ENCODE measurements at regions of chr3 and their contacts with region 1.

Region 1: GRCh38 chr3:120245386-120245785 is 39.6 kb downstream of the GPR156 start:
- DNase-seq: no peak
- ATAC-seq: no peak
- H3K4me3 ChIP-seq: no peak overlapping the region
- H3K27ac ChIP-seq: no peak overlapping the region
- H3K4me1 ChIP-seq: no peaks in the 10 kb centered on the region
- H3K27me3 ChIP-seq: no peaks in the 10 kb centered on the region
- CTCF ChIP-seq: no peak
- POLR2A ChIP-seq: no peak
- RAD21 ChIP-seq: no peak

Region 2: GRCh38 chr3:120177151-120177550 is 68.2 kb before region 1 on chr3:
- CTCF ChIA-PET with region 1: no interaction called
- POLR2A ChIA-PET with region 1: no interaction called
- RAD21 ChIA-PET with region 1: no interaction called
- intact Hi-C with region 1: no loop called
- DNase-seq: no peak
- ATAC-seq: no peak
- H3K4me3 ChIP-seq: no peak overlapping the region
- H3K27ac ChIP-seq: no peak overlapping the region
- H3K4me1 ChIP-seq: peaks cover 0 to 7% of the 10 kb centered on the region in 2 experiments; a peak in 1 of 4 replicates
- H3K27me3 ChIP-seq: no peaks in the 10 kb centered on the region
- CTCF ChIP-seq: no peak
- POLR2A ChIP-seq: no peak
- RAD21 ChIP-seq: no peak

Region 3: DNA sequence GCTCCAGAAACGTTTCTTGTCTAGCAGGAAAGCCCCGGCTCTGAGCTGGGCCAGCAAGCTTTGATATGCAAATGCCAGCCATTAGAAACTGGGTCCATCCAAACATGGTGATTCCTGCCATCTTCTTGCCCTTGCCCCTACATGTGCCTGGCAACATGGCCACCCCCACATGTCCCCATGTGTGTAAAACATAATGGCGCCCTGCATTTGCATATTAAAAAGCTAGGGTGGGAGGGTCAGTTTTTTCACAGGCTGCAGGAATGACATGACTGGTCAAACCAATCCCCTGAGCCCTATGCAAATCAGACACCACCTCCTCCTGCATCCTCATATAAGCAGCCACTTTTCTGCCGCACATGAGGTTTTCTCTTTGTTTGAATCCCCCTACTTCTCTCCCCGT is 18.4 kb after region 1 on chr3:
- CTCF ChIA-PET with region 1: no interaction called
- POLR2A ChIA-PET with region 1: no interaction called
- RAD21 ChIA-PET with region 1: no interaction called
- intact Hi-C with region 1: no loop called
- DNase-seq: no peak
- ATAC-seq: no peak
- H3K4me3 ChIP-seq: no peak overlapping the region
- H3K27ac ChIP-seq: no peak overlapping the region
- H3K4me1 ChIP-seq: no peaks in the 10 kb centered on the region
- H3K27me3 ChIP-seq: no peaks in the 10 kb centered on the region
- CTCF ChIP-seq: no peak
- POLR2A ChIP-seq: no peak
- RAD21 ChIP-seq: no peak

Region 4: GRCh38 chr3:120311863-120312794 is 66.7 kb after region 1 on chr3:
- CTCF ChIA-PET with region 1: no interaction called
- POLR2A ChIA-PET with region 1: no interaction called
- RAD21 ChIA-PET with region 1: no interaction called
- intact Hi-C with region 1: no loop called
- DNase-seq: no peak
- ATAC-seq: no peak
- H3K4me3 ChIP-seq: no peak overlapping the region
- H3K27ac ChIP-seq: no peak overlapping the region
- H3K4me1 ChIP-seq: no peaks in the 10 kb centered on the region
- H3K27me3 ChIP-seq: no peaks in the 10 kb centered on the region
- CTCF ChIP-seq: no peak
- POLR2A ChIP-seq: no peak
- RAD21 ChIP-seq: no peak

Region 5: GRCh38 chr3:120357807-120358206 is 112.4 kb after region 1 on chr3:
- CTCF ChIA-PET with region 1: interaction called, 4 read pairs
- POLR2A ChIA-PET with region 1: no interaction called
- RAD21 ChIA-PET with region 1: no interaction called
- intact Hi-C with region 1: loop called (anchors 1 kb)
- DNase-seq: no peak
- ATAC-seq: peak; percentile 32; the same call in 1 of the 2 replicates
- H3K4me3 ChIP-seq: no peak overlapping the region
- H3K27ac ChIP-seq: no peak overlapping the region
- H3K4me1 ChIP-seq: no peaks in the 10 kb centered on the region
- H3K27me3 ChIP-seq: no peaks in the 10 kb centered on the region
- CTCF ChIP-seq: 0 out of 6 replicates have a peak, but pooled peaks of 2 of the 3 experiments have one; percentile 10 to 16
- POLR2A ChIP-seq: no peak
- RAD21 ChIP-seq: peak; percentile 48; the same call in 1 of the 2 replicates

Region 6: GRCh38 chr3:120506828-120507774 is 261.7 kb after region 1 on chr3:
- CTCF ChIA-PET with region 1: no interaction called
- POLR2A ChIA-PET with region 1: no interaction called
- RAD21 ChIA-PET with region 1: no interaction called
- intact Hi-C with region 1: loop called (anchors 5 kb)
- DNase-seq: peak; percentile 13
- ATAC-seq: peak; percentile 73
- H3K4me3 ChIP-seq: no peak overlapping the region
- H3K27ac ChIP-seq: no peak overlapping the region
- H3K4me1 ChIP-seq: no peaks in the 10 kb centered on the region; a peak in 1 of 4 replicates
- H3K27me3 ChIP-seq: no peaks in the 10 kb centered on the region
- CTCF ChIP-seq: peak; percentile 48 to 78 (median 76); a peak in 5 of 6 replicates
- POLR2A ChIP-seq: no peak
- RAD21 ChIP-seq: peak; percentile 57

Region 7: DNA sequence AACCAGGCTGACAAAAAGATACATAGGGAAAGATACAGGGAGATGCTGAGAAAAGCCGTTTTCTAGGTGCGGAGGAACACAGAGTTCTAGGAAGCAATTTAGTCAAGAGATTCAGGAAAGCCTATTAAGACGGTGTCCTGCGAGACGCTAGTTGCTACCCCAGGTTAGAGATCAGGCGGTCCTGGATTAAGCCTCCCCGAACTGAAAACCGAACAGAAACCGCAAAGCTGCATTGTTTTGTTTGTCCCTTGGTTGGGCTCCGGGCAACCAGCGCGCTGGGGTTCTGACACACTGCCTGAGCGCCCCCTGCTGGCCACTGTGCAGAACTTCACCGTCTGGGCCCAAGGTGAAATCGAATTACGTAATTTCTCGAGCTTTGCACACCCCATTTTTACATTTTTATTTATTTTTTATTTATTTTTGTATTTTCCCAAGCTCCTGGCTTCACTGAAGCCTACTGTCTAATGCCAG is 313.4 kb after region 1 on chr3:
- CTCF ChIA-PET with region 1: interaction called, 26 read pairs
- POLR2A ChIA-PET with region 1: no interaction called
- RAD21 ChIA-PET with region 1: interaction called, 8 read pairs
- intact Hi-C with region 1: loop called (anchors 1 kb)
- DNase-seq: peak; percentile 76
- ATAC-seq: peak; percentile 62
- H3K4me3 ChIP-seq: peak overlapping the region; percentile 52 to 65
- H3K27ac ChIP-seq: peak overlapping the region; percentile 24; the same call in 1 of the 2 replicates
- H3K4me1 ChIP-seq: peaks cover 15 to 35% of the 10 kb centered on the region in 2 experiments
- H3K27me3 ChIP-seq: no peaks in the 10 kb centered on the region
- CTCF ChIP-seq: peak; percentile 83 to 95 (median 92)
- POLR2A ChIP-seq: no peak
- RAD21 ChIP-seq: peak; percentile 96

Measured in HCT116 (cell line).